Cardiac septum (tissue), 1 donor: ENCODE measurements at regions of chr20 and their contacts with region 1.

Region 1: DNA sequence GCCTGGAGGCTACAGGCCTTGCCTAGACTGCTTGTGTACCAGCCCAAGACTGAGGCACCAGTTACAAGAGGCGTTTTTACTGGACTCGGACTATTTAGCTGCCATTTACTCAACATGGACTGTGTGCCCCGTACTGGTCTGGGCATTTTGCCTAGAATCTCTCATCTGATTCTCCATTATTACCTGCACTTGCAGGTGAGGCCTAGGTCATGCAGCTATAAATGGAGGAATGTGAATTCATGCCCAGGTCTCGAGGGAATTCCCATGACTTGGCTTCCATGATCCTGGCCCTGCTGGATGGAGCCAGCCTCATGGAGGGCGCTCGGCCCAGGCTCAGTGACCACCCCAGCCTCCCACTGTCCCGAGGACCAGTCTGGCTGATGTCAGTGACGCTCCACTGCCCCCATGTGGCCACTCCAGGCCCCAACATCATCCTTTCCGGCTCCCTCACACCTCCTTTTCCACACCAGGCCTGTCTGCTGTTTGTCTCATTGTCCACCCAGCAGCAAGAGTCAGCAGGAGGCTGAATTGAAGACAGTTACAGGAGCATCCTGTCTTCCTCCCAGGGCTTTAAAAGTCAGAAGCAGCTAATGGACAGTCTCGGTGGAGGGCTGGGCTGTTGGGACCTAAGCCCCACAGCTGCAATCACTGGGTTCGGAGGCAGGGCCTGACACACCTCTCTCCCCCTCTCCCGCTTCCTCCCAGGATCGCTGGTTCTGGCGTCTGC is 8.7 kb downstream of the MMP24OS start:
- DNase-seq: no peak

Region 2: GRCh38 chr20:35092524-35093266 is 176.5 kb before region 1 on chr20 and contains the start of gene TRPC4AP:
- intact Hi-C with region 1: no loop called
- DNase-seq: peak; percentile 97
- total RNA-seq, gene TRPC4AP: 34.9 TPM

Region 3: GRCh38 chr20:35145141-35145564 is 124.1 kb before region 1 on chr20:
- intact Hi-C with region 1: loop called (anchors 2 kb)
- DNase-seq: no peak

Region 4: DNA sequence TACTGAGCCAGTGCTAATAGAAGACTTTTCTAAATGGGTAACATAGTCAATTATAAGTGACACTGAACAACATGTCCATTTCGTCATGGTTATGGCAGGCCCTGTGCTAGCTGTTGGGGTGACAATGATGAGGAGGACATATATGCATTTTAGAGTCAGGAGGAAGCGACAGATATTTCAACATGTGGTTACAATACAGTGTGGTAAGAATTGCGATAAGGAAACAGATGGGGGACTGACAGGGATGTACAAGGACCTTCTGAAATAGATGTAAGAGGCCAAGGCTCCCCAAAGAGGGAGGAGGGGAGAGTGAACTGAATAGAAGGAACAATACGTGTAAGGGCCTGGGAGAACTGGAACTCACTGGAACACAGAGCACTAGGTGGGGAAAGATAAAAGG is 31.0 kb before region 1 on chr20:
- intact Hi-C with region 1: no loop called
- DNase-seq: no peak